Activated naive CD4-positive, alpha-beta T cell treated with anti-CD3 and anti-CD28 coated beads, Interleukin-2, amount 10 ng/mL, durations not matched to agents 7 days and 5 days (primary cell): ENCODE measurements at regions of chr1 and their contacts with region 1.

Region 1: DNA sequence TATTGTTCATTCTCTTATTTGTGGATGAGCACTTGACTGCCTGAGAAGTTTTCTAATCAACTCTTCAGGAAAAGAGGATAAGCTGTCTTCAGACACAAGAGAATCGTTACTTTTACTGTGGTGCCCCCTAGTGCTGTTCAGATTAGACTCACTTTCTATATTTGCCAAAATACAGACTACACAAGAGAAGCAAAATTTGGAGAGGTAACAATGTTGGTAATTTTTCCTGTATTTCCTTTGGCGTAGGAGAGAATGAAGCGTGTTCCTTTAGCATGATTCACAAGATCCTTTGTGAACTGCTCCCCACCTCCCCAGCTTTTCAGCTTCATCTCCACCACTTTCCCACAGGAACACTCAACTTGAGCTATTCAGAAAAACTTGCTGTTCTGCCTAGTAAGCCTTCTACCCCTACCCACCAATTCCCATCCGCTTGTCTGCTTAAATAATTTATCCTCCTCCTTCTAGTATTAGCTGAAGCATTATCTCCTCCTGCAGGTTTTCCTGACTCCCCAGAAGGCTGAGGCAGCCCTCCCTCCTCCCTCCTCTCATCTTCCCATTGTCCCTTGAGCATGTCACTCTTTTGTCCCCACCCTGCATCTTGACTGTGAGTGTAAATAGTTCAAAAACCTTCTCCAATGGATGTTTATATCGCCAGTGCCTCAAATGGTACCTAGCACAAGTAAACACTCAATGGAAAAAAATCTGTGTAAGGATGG is 4.5 kb downstream of the TNFSF4 start:
- DNase-seq: peak; percentile 24
- H3K4me3 Mint-ChIP-seq: no peak overlapping the region
- H3K27ac Mint-ChIP-seq: no peak overlapping the region
- H3K4me1 Mint-ChIP-seq: peaks cover 38% of the 10 kb centered on the region
- H3K27me3 Mint-ChIP-seq: peaks cover 6% of the 10 kb centered on the region

Region 2: GRCh38 chr1:172778456-172779455 is 423.8 kb before region 1 on chr1:
- CTCF ChIA-PET with region 1: interaction called, 22 read pairs
- DNase-seq: no peak
- H3K4me3 Mint-ChIP-seq: no peak overlapping the region
- H3K27ac Mint-ChIP-seq: no peak overlapping the region
- H3K4me1 Mint-ChIP-seq: peaks cover 7% of the 10 kb centered on the region
- H3K27me3 Mint-ChIP-seq: no peaks in the 10 kb centered on the region

Region 3: DNA sequence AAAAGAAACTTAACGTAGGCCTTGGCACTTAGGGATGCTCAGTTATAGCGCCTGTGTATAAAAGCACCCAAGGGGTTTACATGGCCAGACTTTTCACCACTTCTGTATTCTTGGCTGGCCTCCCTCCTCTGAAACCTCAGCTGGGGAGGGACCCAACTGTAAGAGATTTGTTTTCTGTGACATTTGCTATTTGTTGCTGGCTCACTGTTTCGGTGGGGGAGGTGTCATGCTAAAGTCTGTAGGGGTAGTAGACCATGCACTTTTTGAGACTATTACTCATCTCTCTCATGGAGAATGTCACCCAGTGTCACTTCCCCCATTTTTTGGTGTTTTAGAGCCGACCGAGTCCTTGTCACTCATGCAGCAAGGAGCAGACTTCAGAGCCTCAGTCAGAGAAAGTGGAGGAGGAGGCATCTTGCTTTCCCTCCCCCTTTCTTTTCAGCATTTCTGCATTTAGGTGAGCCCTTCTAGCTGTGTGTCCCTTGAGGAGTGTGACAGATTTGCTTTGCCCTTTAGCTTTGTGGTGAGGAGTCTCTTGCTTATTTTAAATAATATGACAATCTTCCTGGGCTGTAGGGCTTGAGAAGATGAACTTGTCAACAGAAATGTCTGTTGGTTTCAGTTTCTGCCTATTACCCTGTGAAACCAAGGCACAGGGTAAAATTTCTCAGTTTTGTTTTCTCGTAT is 383.6 kb before region 1 on chr1:
- CTCF ChIA-PET with region 1: interaction called, 130 read pairs
- DNase-seq: peak; percentile 60
- H3K4me3 Mint-ChIP-seq: peak overlapping the region; percentile 24
- H3K27ac Mint-ChIP-seq: peak overlapping the region; percentile 93
- H3K4me1 Mint-ChIP-seq: peaks cover 37% of the 10 kb centered on the region
- H3K27me3 Mint-ChIP-seq: no peaks in the 10 kb centered on the region

Region 4: DNA sequence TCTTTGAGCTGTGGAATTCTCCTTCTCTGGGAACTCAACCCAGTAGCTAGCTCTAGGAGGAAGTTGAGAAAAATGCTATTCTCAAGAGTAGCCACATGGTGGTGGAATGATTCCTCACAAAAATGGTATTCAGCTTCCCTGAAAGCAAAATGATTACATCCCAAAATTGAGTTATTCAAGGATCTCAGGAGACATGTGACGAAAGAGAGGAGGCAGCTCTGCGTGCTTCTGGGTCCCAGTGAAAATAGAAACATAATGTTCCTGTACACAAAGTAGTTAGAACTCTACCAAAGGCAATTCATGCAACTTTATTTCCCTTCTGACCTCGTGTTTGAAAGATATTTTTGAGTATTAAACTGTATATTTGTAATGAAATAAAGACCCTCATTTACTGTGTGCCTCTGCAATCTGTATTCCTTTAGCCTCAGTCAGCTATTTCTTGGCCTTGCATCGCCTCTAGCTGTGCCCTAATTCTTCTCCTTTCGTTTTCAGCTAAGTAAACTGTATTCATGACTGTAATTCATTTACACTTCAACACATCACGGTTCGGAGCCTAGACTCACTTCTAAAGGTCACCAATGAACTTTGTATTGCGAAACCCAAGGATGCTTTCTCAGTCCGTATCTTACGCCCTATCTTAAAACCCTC is 376.4 kb before region 1 on chr1:
- CTCF ChIA-PET with region 1: interaction called, 130 read pairs
- DNase-seq: no peak
- H3K4me3 Mint-ChIP-seq: no peak overlapping the region
- H3K27ac Mint-ChIP-seq: no peak overlapping the region
- H3K4me1 Mint-ChIP-seq: no peaks in the 10 kb centered on the region
- H3K27me3 Mint-ChIP-seq: peaks cover 10% of the 10 kb centered on the region

Region 5: GRCh38 chr1:173285048-173285447 is 82.5 kb after region 1 on chr1:
- CTCF ChIA-PET with region 1: no interaction called
- DNase-seq: no peak
- H3K4me3 Mint-ChIP-seq: no peak overlapping the region
- H3K27ac Mint-ChIP-seq: no peak overlapping the region
- H3K4me1 Mint-ChIP-seq: no peaks in the 10 kb centered on the region
- H3K27me3 Mint-ChIP-seq: no peaks in the 10 kb centered on the region

Region 6: DNA sequence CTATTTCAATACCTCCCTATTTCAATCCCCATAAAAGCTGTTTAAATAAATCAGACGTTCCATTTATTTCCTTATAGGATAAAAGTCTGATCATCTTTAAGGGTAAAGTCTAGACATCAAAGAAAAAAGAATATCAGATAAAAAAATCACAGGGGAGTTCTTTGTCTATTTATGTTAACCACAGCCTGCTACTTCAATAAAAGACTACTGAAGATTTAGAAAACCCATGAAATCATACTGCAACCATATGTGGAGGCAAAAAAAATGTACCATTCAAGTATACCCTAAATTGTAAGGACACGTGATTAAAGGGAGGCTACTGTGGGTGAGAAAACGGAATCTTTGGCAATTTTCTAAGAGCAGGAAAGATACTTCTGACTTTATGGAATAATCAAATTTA is 112.7 kb after region 1 on chr1:
- CTCF ChIA-PET with region 1: no interaction called
- DNase-seq: no peak
- H3K4me3 Mint-ChIP-seq: no peak overlapping the region
- H3K27ac Mint-ChIP-seq: no peak overlapping the region
- H3K4me1 Mint-ChIP-seq: no peaks in the 10 kb centered on the region
- H3K27me3 Mint-ChIP-seq: peaks cover 4% of the 10 kb centered on the region